Cardiac septum (tissue), 1 donor: ENCODE measurements at regions of chr3 and their contacts with region 1.

Region 1: DNA sequence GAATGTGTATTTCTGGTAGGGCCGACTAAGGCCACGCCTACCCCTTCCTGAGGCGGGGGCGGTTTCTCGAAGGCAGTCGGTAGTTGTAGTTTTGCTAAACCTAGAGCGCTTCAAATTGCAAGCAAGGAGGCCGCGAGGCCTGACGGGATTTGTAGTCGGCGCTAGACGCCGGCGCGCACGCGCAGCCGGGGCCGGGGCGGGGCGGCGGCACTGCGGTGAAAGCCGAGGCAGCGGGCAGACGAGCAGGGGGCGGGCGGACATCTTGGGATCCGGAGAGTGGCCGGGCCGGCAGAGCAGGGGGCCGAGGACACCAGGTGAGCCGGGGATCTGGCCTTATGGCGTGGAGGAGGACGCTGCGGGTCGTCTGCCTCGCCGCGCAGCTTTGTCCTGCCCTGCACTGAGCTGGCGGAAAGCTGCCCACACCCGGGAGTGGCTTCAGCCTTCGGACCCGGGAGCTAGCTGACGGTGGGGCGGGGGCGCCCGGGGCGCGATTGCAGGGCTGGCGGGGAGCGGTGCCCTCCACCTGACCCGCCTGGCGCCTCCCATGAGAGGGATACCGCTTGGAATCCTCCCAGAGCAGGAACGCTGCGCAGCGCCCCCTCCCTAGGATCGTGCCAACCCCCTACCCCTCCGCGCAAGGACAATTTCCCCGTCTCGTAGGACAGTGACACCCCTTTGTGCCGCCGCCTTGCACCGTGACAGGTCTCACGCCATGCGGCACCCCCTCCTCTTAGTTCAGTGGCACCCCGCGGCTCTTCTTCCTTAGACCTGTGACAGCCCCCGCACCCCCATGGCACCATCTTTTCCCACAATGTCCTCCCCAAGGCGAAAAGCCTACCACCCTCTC is at the start of gene AP2M1:
- DNase-seq: peak; percentile 99
- total RNA-seq, gene AP2M1: 317 TPM

Region 2: GRCh38 chr3:184067573-184068055 is 107.3 kb before region 1 on chr3:
- intact Hi-C with region 1: no loop called
- DNase-seq: no peak

Region 3: DNA sequence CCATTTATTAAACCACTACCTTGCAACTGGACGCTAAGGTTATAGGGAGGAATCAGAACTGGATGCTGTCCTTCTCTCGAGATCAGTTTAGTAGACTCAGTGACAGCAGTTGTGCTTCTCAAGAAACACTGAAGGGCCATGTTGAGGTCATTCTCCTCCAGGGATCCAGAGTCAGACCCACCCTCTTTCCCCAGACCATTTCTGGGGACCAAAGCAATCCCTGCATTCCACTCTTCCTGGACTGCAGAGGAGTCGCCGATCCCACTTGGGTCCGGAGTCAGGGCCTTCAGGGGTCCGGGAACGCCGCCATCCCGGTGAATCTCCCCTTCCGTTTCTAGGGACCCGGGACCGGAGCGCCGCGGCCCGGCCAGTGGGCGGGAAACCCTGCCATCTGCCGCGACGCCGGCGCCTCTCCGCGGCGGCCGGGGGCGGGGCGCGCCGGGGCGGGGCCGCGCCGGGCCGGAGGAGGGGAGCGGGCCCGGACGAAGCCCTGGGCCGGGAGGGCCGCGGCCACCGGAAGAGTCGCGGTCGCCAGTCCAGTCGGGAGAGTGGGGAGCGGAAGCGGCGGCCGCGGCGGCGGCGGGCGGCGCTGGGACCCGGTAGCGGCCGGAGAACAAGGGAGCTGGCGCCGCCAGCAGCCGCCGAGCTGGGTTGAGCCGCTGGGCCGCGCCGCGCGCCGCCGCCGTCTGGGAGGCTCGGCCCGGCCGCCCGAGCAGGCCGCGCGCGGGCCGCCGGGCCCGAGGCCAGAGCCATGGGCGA is 19.8 kb before region 1 on chr3 and contains the start of gene DVL3:
- intact Hi-C with region 1: loop called (anchors 2 kb)
- DNase-seq: peak; percentile 84
- total RNA-seq, gene DVL3: 68.6 TPM

Region 4: GRCh38 chr3:184185461-184186308 is 10.8 kb after region 1 on chr3 and contains the start of gene ABCF3:
- intact Hi-C with region 1: loop called (anchors 1 kb)
- DNase-seq: peak; percentile 100
- total RNA-seq, gene ABCF3: 61.5 TPM